MCF 10A (cell line): ENCODE measurements at regions of chr2 and their contacts with region 1.

Region 1: DNA sequence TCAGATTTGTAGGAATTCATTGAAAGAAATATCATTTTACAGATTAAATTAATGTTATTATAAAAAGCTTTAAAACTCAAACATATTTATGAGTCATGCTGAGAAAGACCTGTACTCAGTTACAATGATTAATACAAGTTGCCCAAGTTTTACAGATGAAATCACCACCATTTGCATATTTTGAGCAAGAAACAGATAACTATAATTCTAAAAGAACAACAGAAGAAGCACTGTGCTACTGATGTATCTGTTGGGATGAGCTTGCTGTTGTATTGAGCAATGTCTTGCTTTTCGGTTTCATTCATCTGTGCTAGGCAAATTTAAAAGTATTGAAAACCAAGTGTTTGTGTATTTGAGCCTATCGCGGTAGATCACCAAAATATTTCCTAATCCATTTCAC is 1589.1 kb upstream of the ZEB2 start:
- DNase-seq: peak; percentile 7
- H3K4me3 Mint-ChIP-seq: no peak overlapping the region
- H3K27ac Mint-ChIP-seq: no peak overlapping the region
- H3K4me1 Mint-ChIP-seq: no peaks in the 10 kb centered on the region
- H3K27me3 Mint-ChIP-seq: no peaks in the 10 kb centered on the region
- CTCF ChIP-seq: no peak

Region 2: DNA sequence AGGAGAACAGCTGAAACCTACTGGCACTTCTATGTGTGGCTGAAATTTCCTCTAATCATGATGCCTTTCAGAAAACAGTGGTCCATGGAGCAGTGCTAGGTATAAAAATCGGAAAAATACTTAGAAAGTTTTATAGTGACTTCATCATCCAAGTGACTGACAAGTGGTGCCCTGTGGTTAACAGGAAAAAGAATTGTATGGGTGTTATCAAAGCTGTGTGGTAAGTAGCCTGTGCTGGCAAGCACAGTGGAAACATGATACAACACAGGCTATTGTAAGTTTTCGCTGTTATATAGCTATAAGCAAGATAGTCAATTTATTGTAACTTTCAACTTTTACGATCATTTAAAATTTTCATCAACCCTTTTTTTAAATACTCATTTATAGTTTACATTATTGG is 10.6 kb after region 1 on chr2:
- CTCF ChIA-PET with region 1: no interaction called
- POLR2A ChIA-PET with region 1: no interaction called
- intact Hi-C with region 1: loop called (anchors 1 kb)
- DNase-seq: no peak
- H3K4me3 Mint-ChIP-seq: no peak overlapping the region
- H3K27ac Mint-ChIP-seq: no peak overlapping the region
- H3K4me1 Mint-ChIP-seq: peaks cover 2% of the 10 kb centered on the region
- H3K27me3 Mint-ChIP-seq: no peaks in the 10 kb centered on the region
- CTCF ChIP-seq: no peak